Testis (tissue), 5 donors: ENCODE measurements at regions of chr15 and their contacts with region 1.

Region 1: DNA sequence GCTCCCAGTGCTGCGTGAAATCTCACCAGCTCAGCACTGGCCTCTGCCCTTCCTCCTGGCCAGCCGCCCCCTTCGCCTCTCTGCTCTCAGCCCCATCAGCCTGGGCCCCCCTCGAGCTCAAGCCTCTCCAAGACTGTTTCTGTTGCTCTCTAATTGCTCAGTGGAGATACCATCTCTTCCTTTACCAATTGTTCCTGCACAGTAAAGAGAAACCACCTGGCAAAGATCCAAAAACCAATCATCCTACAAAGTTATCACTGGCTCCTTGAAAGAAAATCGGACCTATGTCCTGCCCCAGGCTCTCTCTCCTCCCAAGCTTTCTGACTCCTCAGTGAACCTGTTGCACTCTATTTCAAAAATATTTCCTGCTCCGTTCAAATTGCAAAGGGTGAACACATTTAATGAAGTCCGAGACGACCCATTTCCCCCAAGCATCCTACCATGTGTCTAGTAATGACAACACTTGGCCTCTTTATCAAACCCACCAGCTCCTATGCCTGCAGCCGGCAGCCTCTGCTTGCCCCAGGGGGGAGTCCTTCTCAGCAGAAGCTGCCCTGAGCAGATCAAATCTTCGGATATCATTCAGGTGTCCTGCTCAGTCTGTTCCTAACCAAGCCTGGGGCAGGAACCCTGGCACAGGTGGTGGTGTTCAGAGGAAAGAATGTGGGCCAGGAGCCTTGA is 53.7 kb upstream of the FAM174B start:
- DNase-seq: no peak
- H3K4me3 ChIP-seq: no peak overlapping the region
- H3K27ac ChIP-seq: no peak overlapping the region
- H3K4me1 ChIP-seq: no peaks in the 10 kb centered on the region
- H3K27me3 ChIP-seq: no peaks in the 10 kb centered on the region
- CTCF ChIP-seq: no peak
- POLR2A ChIP-seq: no peak

Region 2: GRCh38 chr15:92101708-92102411 is 607.4 kb before region 1 on chr15:
- intact Hi-C with region 1: loop called (anchors 10 kb)
- DNase-seq: no peak
- H3K4me3 ChIP-seq: no peak overlapping the region
- H3K27ac ChIP-seq: no peak overlapping the region
- H3K4me1 ChIP-seq: peaks cover 6% of the 10 kb centered on the region
- H3K27me3 ChIP-seq: no peaks in the 10 kb centered on the region
- CTCF ChIP-seq: no peak
- POLR2A ChIP-seq: no peak

Region 3: GRCh38 chr15:92599394-92599970 is 109.8 kb before region 1 on chr15:
- intact Hi-C with region 1: no loop called
- DNase-seq: no peak
- H3K4me3 ChIP-seq: no peak overlapping the region
- H3K27ac ChIP-seq: no peak overlapping the region
- H3K4me1 ChIP-seq: no peaks in the 10 kb centered on the region
- H3K27me3 ChIP-seq: no peaks in the 10 kb centered on the region
- CTCF ChIP-seq: no peak
- POLR2A ChIP-seq: no peak

Region 4: DNA sequence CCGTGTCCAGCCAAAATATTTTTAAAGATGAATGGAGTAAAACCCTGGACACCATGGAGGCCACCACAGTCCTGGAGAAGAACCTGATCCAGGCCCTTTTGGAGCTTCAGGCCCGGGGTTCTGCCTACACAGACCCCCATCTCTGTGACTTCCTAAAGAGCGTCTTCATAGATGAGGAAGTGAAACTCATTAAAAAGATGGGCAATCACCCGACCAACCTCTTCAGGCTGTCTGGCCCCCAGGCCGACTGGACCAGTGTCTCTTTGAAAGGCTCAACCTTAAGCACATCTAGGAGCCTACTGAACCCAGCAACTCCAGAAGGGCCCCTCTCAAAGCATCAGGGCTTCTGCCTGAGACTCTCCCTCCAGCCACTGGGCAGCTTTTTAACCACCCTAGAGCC is 54.2 kb after region 1 on chr15:
- intact Hi-C with region 1: no loop called
- DNase-seq: no peak
- H3K4me3 ChIP-seq: no peak overlapping the region
- H3K27ac ChIP-seq: no peak overlapping the region
- H3K4me1 ChIP-seq: no peaks in the 10 kb centered on the region
- H3K27me3 ChIP-seq: no peaks in the 10 kb centered on the region
- CTCF ChIP-seq: no peak
- POLR2A ChIP-seq: no peak

Region 5: GRCh38 chr15:92808978-92809879 is 100.0 kb after region 1 on chr15:
- intact Hi-C with region 1: no loop called
- DNase-seq: peak; percentile 96
- H3K4me3 ChIP-seq: peak overlapping the region; percentile 70 to 84
- H3K27ac ChIP-seq: peak overlapping the region; percentile 99
- H3K4me1 ChIP-seq: peaks cover 16% of the 10 kb centered on the region
- H3K27me3 ChIP-seq: no peaks in the 10 kb centered on the region
- CTCF ChIP-seq: peak; percentile 99 to 100 (median 100)
- POLR2A ChIP-seq: peak; percentile 9

Region 6: GRCh38 chr15:92881211-92881754 is 172.0 kb after region 1 on chr15:
- intact Hi-C with region 1: no loop called
- DNase-seq: no peak
- H3K4me3 ChIP-seq: peak overlapping the region in 1 of 2 donors; percentile 52
- H3K27ac ChIP-seq: peak overlapping the region; percentile 91 to 94
- H3K4me1 ChIP-seq: peaks cover 57% of the 10 kb centered on the region
- H3K27me3 ChIP-seq: no peaks in the 10 kb centered on the region
- CTCF ChIP-seq: no peak
- POLR2A ChIP-seq: no peak